ENCODE measurements at regions of chr10 and their contacts with region 1.

Region 1: GRCh38 chr10:87827681-87828080 is 9.7 kb upstream of the ATAD1 start:
- DNase-seq: no peak
- H3K4me3 ChIP-seq: no peak overlapping the region
- H3K27me3 ChIP-seq: no peaks in the 10 kb centered on the region
- CTCF ChIP-seq: no peak

Region 2: DNA sequence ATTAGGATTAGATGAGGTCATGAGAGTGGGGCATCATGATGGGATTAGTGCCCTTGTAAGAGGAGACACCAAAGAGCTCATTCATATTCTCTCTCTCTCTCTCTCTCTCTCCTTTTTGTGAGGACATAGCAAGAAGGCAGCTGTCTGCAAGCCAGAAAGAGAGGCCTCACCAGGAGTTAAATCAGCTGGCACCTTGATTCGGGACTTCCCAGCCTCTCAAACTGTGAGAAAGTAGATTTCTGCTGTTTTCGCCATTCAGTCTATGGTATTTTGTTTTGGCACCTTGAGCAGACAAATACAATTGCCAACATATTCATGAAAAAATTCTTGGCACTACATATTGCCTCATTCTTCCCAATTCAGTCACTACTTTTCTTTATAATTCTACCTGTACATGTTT is 11.0 kb after region 1 on chr10:
- CTCF ChIA-PET with region 1: interaction called, 11 read pairs
- POLR2A ChIA-PET with region 1: no interaction called
- DNase-seq: no peak
- H3K4me3 ChIP-seq: no peak overlapping the region
- H3K27me3 ChIP-seq: no peaks in the 10 kb centered on the region
- CTCF ChIP-seq: no peak

Region 3: GRCh38 chr10:87925570-87925969 is 97.9 kb after region 1 on chr10:
- CTCF ChIA-PET with region 1: no interaction called
- POLR2A ChIA-PET with region 1: no interaction called
- DNase-seq: no peak
- H3K4me3 ChIP-seq: no peak overlapping the region
- H3K27me3 ChIP-seq: no peaks in the 10 kb centered on the region
- CTCF ChIP-seq: no peak

Measured in BJ (cell line).